ENCODE measurements at regions of chr7 and their contacts with region 1.

Region 1: GRCh38 chr7:16982640-16983350 is 101.0 kb upstream of the AGR3 start:
- DNase-seq: peak; percentile 67
- ATAC-seq: peak; percentile 74
- H3K4me3 ChIP-seq: no peak overlapping the region
- H3K27ac ChIP-seq: no peak overlapping the region
- H3K4me1 ChIP-seq: peaks cover 6% of the 10 kb centered on the region
- H3K27me3 ChIP-seq: no peaks in the 10 kb centered on the region
- CTCF ChIP-seq: peak; percentile 98
- POLR2A ChIP-seq: peak; percentile 72
- RAD21 ChIP-seq: peak; percentile 97

Region 2: GRCh38 chr7:16770662-16771329 is 212.0 kb before region 1 on chr7:
- CTCF ChIA-PET with region 1: no interaction called
- POLR2A ChIA-PET with region 1: no interaction called
- dilution Hi-C with region 1: no loop called
- in situ Hi-C with region 1: no loop called
- intact Hi-C with region 1: no loop called
- DNase-seq: no peak
- ATAC-seq: no peak
- H3K4me3 ChIP-seq: no peak overlapping the region
- H3K27ac ChIP-seq: no peak overlapping the region
- H3K4me1 ChIP-seq: no peaks in the 10 kb centered on the region
- H3K27me3 ChIP-seq: no peaks in the 10 kb centered on the region
- CTCF ChIP-seq: no peak
- POLR2A ChIP-seq: no peak
- RAD21 ChIP-seq: no peak

Region 3: GRCh38 chr7:16934722-16935340 is 48.0 kb before region 1 on chr7:
- CTCF ChIA-PET with region 1: interaction called, 3 read pairs
- POLR2A ChIA-PET with region 1: no interaction called
- dilution Hi-C with region 1: no loop called
- in situ Hi-C with region 1: no loop called
- intact Hi-C with region 1: loop called (anchors 5 kb)
- DNase-seq: peak; percentile 48
- ATAC-seq: no peak; the same call in 1 of the 2 replicates
- H3K4me3 ChIP-seq: no peak overlapping the region
- H3K27ac ChIP-seq: no peak overlapping the region
- H3K4me1 ChIP-seq: peaks cover 2% of the 10 kb centered on the region
- H3K27me3 ChIP-seq: no peaks in the 10 kb centered on the region
- CTCF ChIP-seq: no peak
- POLR2A ChIP-seq: no peak
- RAD21 ChIP-seq: no peak

Region 4: GRCh38 chr7:17370092-17370491 is 387.3 kb after region 1 on chr7:
- CTCF ChIA-PET with region 1: interaction called, 9 read pairs
- POLR2A ChIA-PET with region 1: no interaction called
- dilution Hi-C with region 1: no loop called
- in situ Hi-C with region 1: no loop called
- intact Hi-C with region 1: loop called (anchors 1 kb)
- DNase-seq: peak; percentile 97
- ATAC-seq: peak; percentile 55
- H3K4me3 ChIP-seq: no peak overlapping the region
- H3K27ac ChIP-seq: peak overlapping the region; percentile 99
- H3K4me1 ChIP-seq: peaks cover 27% of the 10 kb centered on the region
- H3K27me3 ChIP-seq: no peaks in the 10 kb centered on the region
- CTCF ChIP-seq: no peak
- POLR2A ChIP-seq: no peak
- RAD21 ChIP-seq: no peak

Region 5: GRCh38 chr7:17530741-17531417 is 548.1 kb after region 1 on chr7:
- CTCF ChIA-PET with region 1: no interaction called
- POLR2A ChIA-PET with region 1: no interaction called
- dilution Hi-C with region 1: no loop called
- in situ Hi-C with region 1: no loop called
- intact Hi-C with region 1: loop called (anchors 10 kb)
- DNase-seq: peak; percentile 15
- ATAC-seq: 0 out of 2 replicates have a peak, but pooled peaks have one; percentile 14
- H3K4me3 ChIP-seq: no peak overlapping the region
- H3K27ac ChIP-seq: no peak overlapping the region
- H3K4me1 ChIP-seq: peaks cover 9% of the 10 kb centered on the region
- H3K27me3 ChIP-seq: no peaks in the 10 kb centered on the region
- CTCF ChIP-seq: peak; percentile 41
- POLR2A ChIP-seq: no peak
- RAD21 ChIP-seq: peak; percentile 41

Region 6: DNA sequence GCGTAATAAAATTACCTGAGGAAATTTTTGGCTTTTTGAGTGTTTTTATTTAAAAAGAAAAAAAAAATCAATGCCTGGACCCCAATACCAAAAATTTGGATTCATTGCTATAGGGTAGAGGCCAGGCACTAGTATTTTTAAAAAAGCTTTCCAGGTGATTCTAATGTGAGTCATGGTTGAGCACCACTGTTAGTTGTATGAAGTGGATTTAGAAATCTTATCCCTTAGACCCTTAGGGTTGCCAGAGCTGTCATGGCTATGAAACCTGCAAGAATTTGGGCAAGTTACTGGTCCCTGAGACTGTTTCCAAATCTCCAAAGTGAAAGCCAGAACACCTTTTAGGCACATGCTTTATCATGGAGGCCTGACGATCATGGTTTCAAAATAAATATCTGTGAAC is 578.2 kb after region 1 on chr7:
- CTCF ChIA-PET with region 1: interaction called, 10 read pairs
- POLR2A ChIA-PET with region 1: no interaction called
- dilution Hi-C with region 1: no loop called
- in situ Hi-C with region 1: no loop called
- intact Hi-C with region 1: no loop called
- DNase-seq: no peak
- ATAC-seq: no peak
- H3K4me3 ChIP-seq: no peak overlapping the region
- H3K27ac ChIP-seq: no peak overlapping the region
- H3K4me1 ChIP-seq: peaks cover 10% of the 10 kb centered on the region
- H3K27me3 ChIP-seq: no peaks in the 10 kb centered on the region
- CTCF ChIP-seq: no peak
- POLR2A ChIP-seq: no peak
- RAD21 ChIP-seq: no peak

Region 7: DNA sequence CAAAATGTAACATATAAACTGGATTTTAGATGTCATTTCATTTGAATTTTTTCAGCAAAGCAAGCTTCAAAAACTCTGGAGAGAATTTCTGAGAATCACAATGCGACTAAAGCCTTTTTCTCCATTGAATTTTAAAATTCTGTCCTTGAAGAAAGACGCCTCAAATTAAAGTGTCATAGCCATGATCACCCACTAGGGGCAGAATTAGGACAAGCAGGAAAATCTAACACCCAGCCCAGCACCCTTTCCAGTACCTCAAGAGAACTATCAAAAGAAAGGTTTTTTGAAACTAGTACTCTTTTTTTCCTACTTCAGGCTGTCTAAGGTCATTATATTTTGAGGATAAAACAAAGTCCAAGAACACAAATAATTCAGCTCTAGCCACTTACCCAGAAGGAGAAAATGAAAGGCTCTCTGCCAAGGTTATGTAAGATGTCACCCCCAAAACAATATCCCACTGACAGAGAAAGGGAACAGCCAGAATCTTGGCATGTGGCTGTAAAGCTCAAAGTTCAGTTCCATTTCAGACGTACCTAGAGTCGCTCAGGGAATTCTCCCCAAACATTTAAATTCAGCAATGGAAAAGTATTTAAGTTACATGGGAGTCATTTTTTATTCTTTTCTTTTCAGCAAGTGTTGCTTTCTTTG is 658.1 kb after region 1 on chr7:
- CTCF ChIA-PET with region 1: interaction called, 5 read pairs
- POLR2A ChIA-PET with region 1: no interaction called
- dilution Hi-C with region 1: no loop called
- in situ Hi-C with region 1: loop called (anchors 10 kb)
- intact Hi-C with region 1: loop called (anchors 1 kb)
- DNase-seq: peak; percentile 31
- ATAC-seq: no peak
- H3K4me3 ChIP-seq: no peak overlapping the region
- H3K27ac ChIP-seq: no peak overlapping the region
- H3K4me1 ChIP-seq: peaks cover 2% of the 10 kb centered on the region
- H3K27me3 ChIP-seq: no peaks in the 10 kb centered on the region
- CTCF ChIP-seq: peak; percentile 54
- POLR2A ChIP-seq: no peak
- RAD21 ChIP-seq: peak; percentile 49

Region 8: GRCh38 chr7:17646253-17646956 is 663.6 kb after region 1 on chr7:
- CTCF ChIA-PET with region 1: interaction called, 6 read pairs
- POLR2A ChIA-PET with region 1: no interaction called
- dilution Hi-C with region 1: no loop called
- in situ Hi-C with region 1: loop called (anchors 10 kb)
- intact Hi-C with region 1: loop called (anchors 1 kb)
- DNase-seq: peak; percentile 66
- ATAC-seq: peak; percentile 79
- H3K4me3 ChIP-seq: no peak overlapping the region
- H3K27ac ChIP-seq: no peak overlapping the region
- H3K4me1 ChIP-seq: peaks cover 8% of the 10 kb centered on the region
- H3K27me3 ChIP-seq: no peaks in the 10 kb centered on the region
- CTCF ChIP-seq: peak; percentile 71
- POLR2A ChIP-seq: no peak
- RAD21 ChIP-seq: peak; percentile 78